ENCODE measurements at regions of chr14 and their contacts with region 1.

Region 1: DNA sequence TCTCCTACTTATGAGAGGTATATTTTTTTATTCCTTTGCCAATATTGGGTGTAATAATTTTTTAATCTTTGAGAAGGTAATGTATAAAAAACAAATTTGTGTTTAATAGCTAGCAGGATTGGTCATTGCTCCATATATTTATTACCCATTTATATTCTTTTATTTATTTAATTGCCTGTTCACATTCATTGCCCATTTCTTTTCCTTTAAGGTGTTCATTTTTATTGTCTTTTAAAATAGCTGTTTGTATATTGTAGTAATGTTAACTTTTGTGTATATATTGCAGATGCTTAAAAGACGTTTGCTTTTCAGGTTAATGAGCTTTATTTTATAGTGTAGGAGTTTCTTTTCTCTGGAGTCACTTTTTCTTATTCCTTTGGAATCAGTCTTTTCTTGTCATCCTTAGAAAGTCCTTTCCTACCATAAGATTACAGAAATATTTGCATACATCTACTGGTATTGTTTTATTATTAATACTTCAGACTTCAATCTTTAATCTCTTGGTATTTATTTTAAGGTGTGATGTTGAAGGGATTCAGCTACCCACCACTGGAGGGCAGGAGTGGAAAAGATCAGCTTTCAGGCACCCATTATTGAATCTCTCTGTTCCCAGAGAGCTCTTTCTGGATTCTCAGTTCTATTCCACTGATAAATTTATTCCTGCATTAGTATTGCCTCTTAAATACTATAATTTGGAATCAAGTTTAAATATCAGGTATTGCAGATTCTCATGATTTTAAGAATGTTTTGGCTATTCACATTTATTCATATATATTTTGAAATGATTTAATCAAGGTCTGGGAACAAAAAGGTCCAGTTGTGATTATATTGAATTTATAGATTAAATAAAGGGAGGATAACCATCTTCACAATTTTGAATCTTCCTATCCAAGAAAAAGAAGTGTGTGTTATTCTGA is 17.3 kb downstream of the PPM1A start:
- DNase-seq: peak in 4 of 5 donors; percentile 16 to 31 (median 24)
- H3K4me3 ChIP-seq: no peak overlapping the region
- H3K4me3 Mint-ChIP-seq: no peak overlapping the region
- H3K27ac ChIP-seq: no peak overlapping the region
- H3K27ac Mint-ChIP-seq: no peak overlapping the region
- H3K4me1 ChIP-seq: peaks cover 8% of the 10 kb centered on the region
- H3K4me1 Mint-ChIP-seq: peaks cover 19 to 39% (median 34%) of the 10 kb centered on the region in 4 donors
- H3K27me3 ChIP-seq: no peaks in the 10 kb centered on the region
- H3K27me3 Mint-ChIP-seq: no peaks in the 10 kb centered on the region

Region 2: DNA sequence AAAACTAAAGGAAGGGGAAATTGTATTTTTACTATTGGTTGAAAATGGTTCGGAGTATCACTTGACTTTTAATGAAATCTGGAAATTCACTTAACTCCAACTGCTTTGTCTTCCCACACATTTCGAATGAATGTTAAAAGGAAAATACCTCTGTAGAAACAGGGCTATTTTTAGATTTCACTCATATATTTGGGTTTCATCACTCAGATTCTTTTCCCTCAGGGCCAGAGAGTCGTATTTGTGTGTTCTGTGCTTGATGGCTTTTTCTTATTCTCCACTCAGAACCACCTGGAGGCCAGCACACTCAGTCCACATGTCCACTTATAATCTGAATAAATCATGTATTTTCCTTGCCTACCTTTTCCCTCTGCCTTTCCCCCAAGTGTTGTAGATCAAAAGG is 1037.9 kb before region 1 on chr14:
- CTCF ChIA-PET with region 1: no interaction called
- POLR2A ChIA-PET with region 1: no interaction called
- intact Hi-C with region 1: no loop called
- DNase-seq: no peak
- H3K4me3 ChIP-seq: no peak overlapping the region
- H3K4me3 Mint-ChIP-seq: no peak overlapping the region
- H3K27ac ChIP-seq: no peak overlapping the region
- H3K27ac Mint-ChIP-seq: peak overlapping the region in 1 of 7 donors; percentile 10
- H3K4me1 ChIP-seq: peaks cover 15% of the 10 kb centered on the region
- H3K4me1 Mint-ChIP-seq: peaks cover 23 to 29% (median 25%) of the 10 kb centered on the region in 4 donors
- H3K27me3 ChIP-seq: no peaks in the 10 kb centered on the region
- H3K27me3 Mint-ChIP-seq: no peaks in the 10 kb centered on the region

Region 3: DNA sequence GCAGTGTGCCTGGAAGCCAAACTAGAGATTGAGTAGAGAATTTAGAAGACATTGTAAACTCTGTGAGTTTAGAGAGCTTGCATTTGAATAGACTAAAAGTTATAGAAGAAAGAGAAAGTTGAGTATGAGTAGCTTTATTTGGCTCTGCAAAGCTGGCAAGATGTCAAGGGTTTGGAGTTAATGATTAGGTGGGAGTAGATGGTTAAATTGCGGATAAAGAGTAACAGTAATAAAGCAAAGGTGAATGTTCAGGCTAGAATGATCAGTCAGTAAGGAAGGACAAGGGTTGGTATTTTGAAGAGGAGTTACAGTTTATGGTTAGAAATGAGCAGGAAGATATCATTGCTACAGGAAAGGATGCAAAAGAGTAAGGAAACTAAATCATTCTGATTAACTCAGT is 12.1 kb before region 1 on chr14:
- CTCF ChIA-PET with region 1: interaction called, 20 read pairs
- POLR2A ChIA-PET with region 1: interaction called, 16 read pairs
- intact Hi-C with region 1: loop called (anchors 1 kb)
- DNase-seq: no peak
- H3K4me3 ChIP-seq: no peak overlapping the region
- H3K4me3 Mint-ChIP-seq: peak overlapping the region in 2 of 8 donors; percentile 4 to 5
- H3K27ac ChIP-seq: no peak overlapping the region
- H3K27ac Mint-ChIP-seq: no peak overlapping the region
- H3K4me1 ChIP-seq: peaks cover 53% of the 10 kb centered on the region
- H3K4me1 Mint-ChIP-seq: peaks cover 52 to 76% (median 63%) of the 10 kb centered on the region in 4 donors
- H3K27me3 ChIP-seq: no peaks in the 10 kb centered on the region
- H3K27me3 Mint-ChIP-seq: no peaks in the 10 kb centered on the region

Region 4: DNA sequence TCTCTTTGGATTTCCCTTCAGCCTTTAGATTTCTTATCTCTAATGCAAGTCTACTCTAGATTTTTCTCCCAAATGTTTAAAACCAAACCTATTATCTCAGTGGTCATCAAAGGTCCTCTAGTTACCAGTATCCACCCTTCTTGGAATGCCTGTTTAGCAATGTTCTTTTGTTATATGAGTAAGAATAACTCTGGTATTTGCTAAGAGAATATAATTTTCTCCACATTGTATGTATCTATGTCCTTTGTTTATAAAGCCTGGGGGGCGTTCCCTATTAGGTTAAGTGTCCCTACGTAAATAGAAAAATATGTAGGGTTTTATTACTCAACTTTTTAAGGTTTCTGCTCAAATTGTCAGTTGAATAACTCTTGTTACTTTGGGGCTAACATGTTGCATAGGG is 10.1 kb after region 1 on chr14:
- CTCF ChIA-PET with region 1: interaction called, 14 read pairs
- POLR2A ChIA-PET with region 1: no interaction called
- intact Hi-C with region 1: no loop called
- DNase-seq: no peak
- H3K4me3 ChIP-seq: no peak overlapping the region
- H3K4me3 Mint-ChIP-seq: peak overlapping the region in 1 of 8 donors; percentile 3
- H3K27ac ChIP-seq: no peak overlapping the region
- H3K27ac Mint-ChIP-seq: no peak overlapping the region
- H3K4me1 ChIP-seq: peaks cover 30% of the 10 kb centered on the region
- H3K4me1 Mint-ChIP-seq: peaks cover 44 to 76% (median 61%) of the 10 kb centered on the region in 4 donors
- H3K27me3 ChIP-seq: no peaks in the 10 kb centered on the region
- H3K27me3 Mint-ChIP-seq: no peaks in the 10 kb centered on the region